PC-3 (cell line): ENCODE measurements at regions of chr2 and their contacts with region 1.

Region 1: GRCh38 chr2:123518367-123518766 is 506.7 kb upstream of the CNTNAP5 start:
- DNase-seq: peak; percentile 88
- ATAC-seq: peak; percentile 83
- H3K4me3 ChIP-seq: no peak overlapping the region
- H3K27ac ChIP-seq: peak overlapping the region; percentile 56
- H3K4me1 ChIP-seq: peaks cover 39% of the 10 kb centered on the region
- H3K27me3 ChIP-seq: no peaks in the 10 kb centered on the region
- CTCF ChIP-seq: no peak

Region 2: GRCh38 chr2:123095219-123095835 is 423.0 kb before region 1 on chr2:
- CTCF ChIA-PET with region 1: no interaction called
- POLR2A ChIA-PET with region 1: no interaction called
- intact Hi-C with region 1: loop called (anchors 10 kb)
- DNase-seq: no peak
- ATAC-seq: no peak
- H3K4me3 ChIP-seq: no peak overlapping the region
- H3K27ac ChIP-seq: no peak overlapping the region
- H3K4me1 ChIP-seq: peaks cover 38% of the 10 kb centered on the region
- H3K27me3 ChIP-seq: no peaks in the 10 kb centered on the region
- CTCF ChIP-seq: no peak

Region 3: DNA sequence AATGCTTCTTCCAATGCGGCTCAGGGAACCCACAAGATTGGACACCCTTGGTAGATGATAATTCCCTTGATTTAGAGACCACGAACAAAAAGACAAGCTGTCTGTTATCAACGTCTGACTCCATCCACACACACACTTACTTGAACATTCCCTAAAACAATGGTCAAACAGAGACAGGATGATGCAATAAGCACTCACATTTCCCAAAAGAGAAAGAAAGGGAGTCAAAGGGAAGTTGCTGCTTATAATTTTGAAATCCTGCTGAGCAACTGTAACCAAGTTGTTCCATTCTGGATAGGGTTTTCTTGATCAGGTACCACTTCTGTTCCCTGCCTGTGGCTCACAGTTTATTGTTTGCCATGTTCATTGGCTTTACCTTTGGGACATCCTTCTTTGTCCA is 64.6 kb before region 1 on chr2:
- CTCF ChIA-PET with region 1: no interaction called
- POLR2A ChIA-PET with region 1: no interaction called
- intact Hi-C with region 1: no loop called
- DNase-seq: no peak
- ATAC-seq: no peak
- H3K4me3 ChIP-seq: no peak overlapping the region
- H3K27ac ChIP-seq: no peak overlapping the region
- H3K4me1 ChIP-seq: no peaks in the 10 kb centered on the region
- H3K27me3 ChIP-seq: no peaks in the 10 kb centered on the region
- CTCF ChIP-seq: no peak

Region 4: DNA sequence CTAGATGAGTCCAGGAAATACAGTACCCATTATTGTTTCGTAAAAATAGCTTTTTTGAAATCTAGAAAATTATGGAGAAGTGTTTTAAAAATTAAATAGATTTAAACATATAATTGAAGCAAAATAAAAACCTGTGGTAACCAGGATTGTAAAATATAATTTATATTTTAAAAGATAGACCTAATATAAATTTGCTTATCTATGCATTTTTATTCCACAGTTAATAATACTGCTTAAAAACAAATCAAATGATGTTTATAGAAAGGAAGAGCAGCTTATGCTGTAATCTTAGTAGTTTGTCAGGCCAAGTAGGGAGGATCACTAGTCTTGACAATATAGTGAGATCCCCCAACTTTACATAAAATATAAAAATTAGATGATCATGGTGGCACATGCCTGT is 117.9 kb after region 1 on chr2:
- CTCF ChIA-PET with region 1: no interaction called
- POLR2A ChIA-PET with region 1: no interaction called
- intact Hi-C with region 1: no loop called
- DNase-seq: no peak
- ATAC-seq: no peak
- H3K4me3 ChIP-seq: no peak overlapping the region
- H3K27ac ChIP-seq: no peak overlapping the region
- H3K4me1 ChIP-seq: no peaks in the 10 kb centered on the region
- H3K27me3 ChIP-seq: no peaks in the 10 kb centered on the region
- CTCF ChIP-seq: no peak

Region 5: DNA sequence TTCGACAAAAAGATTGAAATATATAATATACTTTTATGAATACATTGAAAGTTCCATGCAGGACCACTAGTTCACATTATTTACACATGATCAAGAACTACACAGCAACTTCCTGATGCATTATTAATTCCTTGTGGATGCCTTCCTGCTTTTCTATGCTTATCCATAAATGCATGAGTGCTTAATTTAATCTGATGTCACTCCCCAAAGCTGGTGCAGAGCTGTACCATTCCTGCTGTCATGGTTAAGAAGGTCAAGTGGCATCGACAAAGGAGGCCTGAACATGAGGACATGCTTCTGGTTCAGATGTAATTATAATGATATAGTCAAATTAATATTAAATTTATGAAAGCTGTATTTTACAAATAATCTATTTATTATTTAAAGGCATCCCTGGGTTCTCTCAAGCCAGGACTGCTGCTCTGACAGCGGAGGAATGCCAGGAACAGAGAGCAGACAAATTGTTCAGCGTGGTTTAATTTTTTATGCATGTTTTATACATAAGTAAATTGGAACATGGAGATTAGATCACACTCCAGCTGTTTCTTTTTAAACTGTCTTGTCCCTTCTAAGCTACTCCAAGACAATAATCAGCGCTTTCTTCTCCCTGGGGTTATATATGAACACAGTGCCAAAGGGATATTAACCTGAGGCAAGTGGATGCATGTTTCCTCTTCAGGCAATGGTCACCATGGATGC is 199.4 kb after region 1 on chr2:
- CTCF ChIA-PET with region 1: no interaction called
- POLR2A ChIA-PET with region 1: no interaction called
- intact Hi-C with region 1: loop called (anchors 10 kb)
- DNase-seq: no peak
- ATAC-seq: no peak
- H3K4me3 ChIP-seq: no peak overlapping the region
- H3K27ac ChIP-seq: no peak overlapping the region
- H3K4me1 ChIP-seq: peaks cover 37% of the 10 kb centered on the region
- H3K27me3 ChIP-seq: no peaks in the 10 kb centered on the region
- CTCF ChIP-seq: no peak

Region 6: GRCh38 chr2:123993728-123994323 is 475.5 kb after region 1 on chr2:
- CTCF ChIA-PET with region 1: no interaction called
- POLR2A ChIA-PET with region 1: no interaction called
- intact Hi-C with region 1: loop called (anchors 10 kb)
- DNase-seq: peak; percentile 70
- ATAC-seq: peak; percentile 84
- H3K4me3 ChIP-seq: no peak overlapping the region
- H3K27ac ChIP-seq: no peak overlapping the region
- H3K4me1 ChIP-seq: no peaks in the 10 kb centered on the region
- H3K27me3 ChIP-seq: no peaks in the 10 kb centered on the region
- CTCF ChIP-seq: peak; percentile 73